Activated T-helper 1 cell treated with anti-CD3 and anti-CD28 coated beads, Interleukin-12 subunit alpha, Interleukin-12 subunit beta, Interleukin-2, Interleukin-4 antibody, amounts not matched to agents 30 ng/mL and 10 ng/mL and 1 ng/mL, durations not matched to agents 14 hours and 24 hours and 36 hours (primary cell): ENCODE measurements at regions of chr11 and their contacts with region 1.

Region 1: GRCh38 chr11:8964324-8965320 is at the start of gene TMEM9B:
- DNase-seq: peak; percentile 79
- H3K4me3 Mint-ChIP-seq: peak within 1 kb of the TSS; percentile 99
- H3K27ac Mint-ChIP-seq: peak within 1 kb of the TSS; percentile 95
- H3K4me1 Mint-ChIP-seq: peaks cover 31% of the 10 kb centered on the region
- H3K27me3 Mint-ChIP-seq: no peaks in the 10 kb centered on the region
- total RNA-seq, gene TMEM9B: 27.0 and 31.3 TPM in 2 replicates

Region 2: GRCh38 chr11:7986768-7987559 is 977.7 kb before region 1 on chr11 and contains the start of gene EIF3F:
- intact Hi-C with region 1: loop called (anchors 5 kb)
- DNase-seq: peak; percentile 91
- H3K4me3 Mint-ChIP-seq: peak within 1 kb of the TSS; percentile 99
- H3K27ac Mint-ChIP-seq: peak within 1 kb of the TSS; percentile 93
- H3K4me1 Mint-ChIP-seq: peaks cover 39% of the 10 kb centered on the region
- H3K27me3 Mint-ChIP-seq: peaks cover 2% of the 10 kb centered on the region
- total RNA-seq, gene EIF3F: 210 and 214 TPM in 2 replicates

Region 3: DNA sequence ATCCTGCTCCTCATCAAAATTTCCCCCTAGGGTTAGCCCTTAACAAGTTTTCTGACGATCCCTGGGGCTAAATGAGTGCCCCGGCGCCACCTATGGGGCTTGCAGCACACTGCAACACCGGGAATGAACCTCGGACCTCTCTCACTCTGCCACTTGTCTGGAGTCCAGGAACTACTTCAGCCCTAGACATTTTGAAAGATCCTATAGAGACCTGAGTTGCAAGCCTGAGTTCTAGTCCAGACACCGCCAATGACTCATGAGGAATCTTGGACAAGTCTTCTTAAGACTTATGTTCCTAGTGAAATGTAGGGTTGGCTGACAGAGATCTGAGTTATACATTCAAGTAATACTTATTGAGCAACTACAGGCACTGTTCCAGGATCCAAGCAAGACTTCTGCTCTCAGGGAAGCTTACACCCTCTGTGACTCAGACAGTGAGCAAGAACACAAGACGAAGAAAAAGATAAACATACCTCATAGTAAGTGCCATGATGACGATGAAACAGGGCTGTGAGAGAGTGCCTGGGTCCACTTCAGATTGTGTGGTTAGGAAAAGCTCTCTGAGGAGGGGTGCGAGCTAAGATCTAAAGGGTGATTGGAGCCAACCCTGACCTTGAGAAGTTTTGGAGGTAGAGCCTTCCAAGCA is 360.4 kb before region 1 on chr11:
- intact Hi-C with region 1: loop called (anchors 5 kb)
- DNase-seq: no peak
- H3K4me3 Mint-ChIP-seq: no peak overlapping the region
- H3K27ac Mint-ChIP-seq: no peak overlapping the region
- H3K4me1 Mint-ChIP-seq: no peaks in the 10 kb centered on the region
- H3K27me3 Mint-ChIP-seq: peaks cover 14% of the 10 kb centered on the region

Region 4: GRCh38 chr11:8688414-8689362 is 275.9 kb before region 1 on chr11:
- intact Hi-C with region 1: loop called (anchors 1 kb)
- DNase-seq: peak; percentile 82
- H3K4me3 Mint-ChIP-seq: peak overlapping the region; percentile 94
- H3K27ac Mint-ChIP-seq: peak overlapping the region; percentile 91
- H3K4me1 Mint-ChIP-seq: peaks cover 60% of the 10 kb centered on the region
- H3K27me3 Mint-ChIP-seq: no peaks in the 10 kb centered on the region

Region 5: DNA sequence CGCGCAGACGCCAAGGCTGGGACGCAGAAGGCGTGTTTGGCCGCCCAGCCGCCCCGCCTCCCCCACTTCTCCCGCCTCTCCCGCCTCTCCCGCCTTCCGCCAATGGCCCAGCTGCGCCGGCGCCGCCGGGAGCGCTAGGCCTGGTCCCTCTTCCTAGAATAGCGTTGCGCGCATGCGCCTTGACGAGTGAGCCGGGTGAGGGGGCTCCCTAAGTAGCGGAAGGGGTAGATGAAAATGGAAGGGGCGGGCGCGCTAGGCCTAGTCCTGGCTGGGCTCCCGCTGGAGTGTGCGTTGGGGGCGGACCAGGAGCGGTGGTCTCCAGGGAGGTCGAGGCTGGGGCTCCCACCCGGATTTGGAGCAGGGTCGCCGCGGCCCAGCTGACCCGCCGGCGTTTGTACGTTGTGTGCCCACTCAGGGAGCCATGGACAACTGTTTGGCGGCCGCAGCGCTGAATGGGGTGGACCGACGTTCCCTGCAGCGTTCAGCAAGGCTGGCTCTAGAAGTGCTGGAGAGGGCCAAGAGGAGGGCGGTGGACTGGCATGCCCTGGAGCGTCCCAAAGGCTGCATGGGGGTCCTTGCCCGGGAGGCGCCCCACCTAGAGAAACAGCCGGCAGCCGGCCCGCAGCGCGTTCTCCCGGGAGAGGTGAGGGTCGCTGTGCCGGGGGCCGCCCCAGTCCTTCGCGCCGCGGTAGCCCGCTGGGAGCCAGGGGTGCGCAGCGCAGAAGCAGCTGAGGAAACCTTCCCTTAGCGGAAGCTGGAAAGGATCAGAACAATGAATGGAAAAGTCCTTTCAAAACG is 53.4 kb before region 1 on chr11 and contains the start of gene AKIP1:
- intact Hi-C with region 1: loop called (anchors 1 kb)
- DNase-seq: peak; percentile 77
- H3K4me3 Mint-ChIP-seq: peak within 1 kb of the TSS; percentile 97
- H3K27ac Mint-ChIP-seq: peak within 1 kb of the TSS; percentile 87
- H3K4me1 Mint-ChIP-seq: peaks cover 45% of the 10 kb centered on the region
- H3K27me3 Mint-ChIP-seq: peaks cover 12% of the 10 kb centered on the region
- total RNA-seq, gene AKIP1: 33.4 and 36.9 TPM in 2 replicates

Region 6: GRCh38 chr11:9060700-9061111 is 96.1 kb after region 1 on chr11:
- intact Hi-C with region 1: loop called (anchors 2 kb)
- DNase-seq: peak; percentile 48
- H3K4me3 Mint-ChIP-seq: no peak overlapping the region
- H3K27ac Mint-ChIP-seq: peak overlapping the region; percentile 40
- H3K4me1 Mint-ChIP-seq: peaks cover 12% of the 10 kb centered on the region
- H3K27me3 Mint-ChIP-seq: peaks cover 16% of the 10 kb centered on the region

Region 7: DNA sequence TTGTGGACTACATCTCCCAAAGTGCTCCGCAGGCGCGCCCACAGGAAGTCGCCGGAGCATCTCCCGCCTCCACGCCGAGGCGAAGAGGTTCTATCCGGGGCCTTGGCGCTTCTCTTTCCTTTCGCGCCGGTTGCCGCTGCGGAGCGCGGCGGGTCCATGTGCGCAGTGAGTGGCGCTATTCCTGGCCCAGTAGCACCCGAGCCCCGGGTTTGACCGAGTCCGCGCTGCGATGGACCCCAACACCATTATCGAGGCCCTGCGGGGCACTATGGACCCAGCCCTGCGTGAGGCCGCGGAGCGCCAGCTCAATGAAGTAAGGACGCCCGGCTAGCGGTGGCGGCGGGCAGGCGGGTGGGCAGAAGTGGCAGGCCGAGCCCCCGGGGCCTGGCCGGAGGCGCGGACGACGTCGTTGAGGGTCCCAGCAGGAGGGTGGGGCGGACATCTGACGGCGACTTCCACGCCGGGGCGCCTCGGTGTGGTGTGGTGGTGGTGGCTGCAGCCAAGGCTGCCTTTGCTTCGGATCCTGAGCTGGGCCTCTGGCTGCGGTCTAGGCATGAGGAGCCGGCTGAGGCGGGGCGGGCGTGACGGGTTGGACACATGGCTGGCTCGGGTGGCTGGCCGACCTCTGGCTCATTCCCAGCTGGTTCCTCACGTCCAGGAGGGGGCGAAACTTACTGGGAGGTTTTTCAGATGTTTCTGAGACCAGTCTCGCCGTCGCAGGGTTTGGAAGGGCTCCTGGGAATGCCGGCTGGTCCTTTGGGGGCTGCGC is 420.1 kb after region 1 on chr11 and contains the start of gene IPO7:
- intact Hi-C with region 1: loop called (anchors 1 kb)
- DNase-seq: peak; percentile 87
- H3K4me3 Mint-ChIP-seq: peak within 1 kb of the TSS; percentile 96
- H3K27ac Mint-ChIP-seq: peak within 1 kb of the TSS; percentile 95
- H3K4me1 Mint-ChIP-seq: peaks cover 36% of the 10 kb centered on the region
- H3K27me3 Mint-ChIP-seq: no peaks in the 10 kb centered on the region
- total RNA-seq, gene IPO7: 136 and 153 TPM in 2 replicates